ENCODE measurements at regions of chr22 and their contacts with region 1.

Region 1: DNA sequence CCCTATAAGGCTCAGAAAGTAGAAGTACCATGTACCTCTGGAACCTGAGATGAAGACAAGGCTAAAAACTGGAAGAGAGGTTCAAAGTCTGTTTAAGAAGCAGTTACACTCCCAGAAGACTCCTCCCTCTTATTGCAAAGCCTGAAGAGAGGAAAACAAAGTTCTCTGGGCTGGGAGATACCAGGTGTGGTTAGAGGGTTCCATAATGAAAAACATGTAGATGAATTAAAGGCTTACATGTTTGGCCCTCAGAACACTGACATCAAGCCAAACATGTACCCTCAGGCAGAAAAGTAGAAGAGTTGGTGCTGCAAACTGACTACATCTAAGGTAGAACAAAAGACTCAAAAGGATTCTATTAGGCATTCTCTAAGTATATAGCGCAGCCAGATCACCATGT is 205.3 kb downstream of the TTC28 start:
- DNase-seq: no peak
- H3K4me3 ChIP-seq: no peak overlapping the region
- H3K27ac ChIP-seq: no peak overlapping the region
- H3K4me1 ChIP-seq: no peaks in the 10 kb centered on the region
- H3K27me3 ChIP-seq: no peaks in the 10 kb centered on the region
- CTCF ChIP-seq: no peak
- POLR2A ChIP-seq: no peak

Region 2: DNA sequence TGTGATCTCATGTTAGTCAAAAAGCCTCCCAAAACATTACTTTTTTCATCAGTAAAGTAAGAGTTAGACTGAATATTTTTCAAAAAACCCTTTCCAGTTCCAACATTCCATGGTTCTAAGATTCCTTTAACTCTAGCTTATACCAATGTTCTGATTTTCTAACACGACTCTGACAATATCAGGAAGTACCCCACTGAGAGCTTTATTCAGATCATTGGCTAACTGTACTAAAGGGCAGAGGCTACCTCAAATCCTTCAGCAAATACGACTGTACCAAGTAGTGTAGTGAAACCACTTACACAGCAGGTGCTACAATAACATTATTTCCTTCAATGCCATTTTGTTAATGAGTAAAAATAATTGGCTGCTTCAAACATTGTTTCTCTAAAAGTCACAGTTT is 341.9 kb before region 1 on chr22:
- intact Hi-C with region 1: loop called (anchors 5 kb)
- DNase-seq: no peak
- H3K4me3 ChIP-seq: no peak overlapping the region
- H3K27ac ChIP-seq: no peak overlapping the region
- H3K4me1 ChIP-seq: no peaks in the 10 kb centered on the region
- H3K27me3 ChIP-seq: no peaks in the 10 kb centered on the region
- CTCF ChIP-seq: no peak
- POLR2A ChIP-seq: no peak

Region 3: GRCh38 chr22:28497188-28497587 is 22.9 kb after region 1 on chr22:
- intact Hi-C with region 1: no loop called
- DNase-seq: no peak
- H3K4me3 ChIP-seq: no peak overlapping the region
- H3K27ac ChIP-seq: no peak overlapping the region
- H3K4me1 ChIP-seq: no peaks in the 10 kb centered on the region
- H3K27me3 ChIP-seq: no peaks in the 10 kb centered on the region
- CTCF ChIP-seq: no peak
- POLR2A ChIP-seq: no peak

Region 4: GRCh38 chr22:28750471-28750881 is 276.1 kb after region 1 on chr22:
- intact Hi-C with region 1: loop called (anchors 5 kb)
- DNase-seq: no peak
- H3K4me3 ChIP-seq: no peak overlapping the region
- H3K27ac ChIP-seq: no peak overlapping the region
- H3K4me1 ChIP-seq: no peaks in the 10 kb centered on the region
- H3K27me3 ChIP-seq: no peaks in the 10 kb centered on the region
- CTCF ChIP-seq: no peak
- POLR2A ChIP-seq: no peak

Measured in breast epithelium (tissue), 4 donors.